Naive thymus-derived CD4-positive, alpha-beta T cell (primary cell): ENCODE measurements at regions of chr21 and their contacts with region 1.

Region 1: DNA sequence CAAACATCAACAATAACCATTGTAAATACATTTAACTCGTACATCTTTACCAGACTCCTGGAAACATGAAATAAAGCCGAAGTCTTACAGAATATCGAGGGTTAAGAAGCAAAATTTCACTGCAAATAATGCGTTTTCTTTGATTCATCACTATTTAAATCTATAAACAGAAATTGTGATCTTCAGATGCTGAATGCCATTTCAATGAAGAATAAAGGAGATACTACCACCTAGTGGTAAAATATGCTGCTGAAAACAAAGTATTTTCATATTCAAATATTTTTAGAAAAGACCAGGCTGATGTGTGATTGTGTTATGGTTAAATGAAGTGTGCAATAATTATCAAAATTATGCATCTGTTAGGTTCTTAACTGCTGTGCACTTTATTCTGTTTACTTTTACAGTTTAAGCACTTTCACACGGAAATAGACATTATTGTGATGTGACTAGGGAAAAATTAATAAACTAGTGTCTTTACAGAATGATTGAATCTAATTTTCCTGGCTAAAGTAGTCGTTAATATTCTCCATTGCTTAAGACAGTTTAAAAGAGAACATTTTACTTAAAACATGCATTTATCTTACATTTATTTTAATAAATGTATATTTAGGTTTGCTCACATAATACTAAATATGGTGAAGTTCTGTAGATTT is 1093.1 kb downstream of the MRPL39 start:
- DNase-seq: peak in 3 of 9 donors; percentile 4 to 7 (median 4)
- ATAC-seq: no peak
- H3K4me3 ChIP-seq: no peak overlapping the region
- H3K4me3 Mint-ChIP-seq: no peak overlapping the region
- H3K27ac ChIP-seq: no peak overlapping the region
- H3K27ac Mint-ChIP-seq: no peak overlapping the region
- H3K4me1 ChIP-seq: no peaks in the 10 kb centered on the region
- H3K4me1 Mint-ChIP-seq: no peaks in the 10 kb centered on the region
- H3K27me3 ChIP-seq: no peaks in the 10 kb centered on the region
- H3K27me3 Mint-ChIP-seq: no peaks in the 10 kb centered on the region

Region 2: DNA sequence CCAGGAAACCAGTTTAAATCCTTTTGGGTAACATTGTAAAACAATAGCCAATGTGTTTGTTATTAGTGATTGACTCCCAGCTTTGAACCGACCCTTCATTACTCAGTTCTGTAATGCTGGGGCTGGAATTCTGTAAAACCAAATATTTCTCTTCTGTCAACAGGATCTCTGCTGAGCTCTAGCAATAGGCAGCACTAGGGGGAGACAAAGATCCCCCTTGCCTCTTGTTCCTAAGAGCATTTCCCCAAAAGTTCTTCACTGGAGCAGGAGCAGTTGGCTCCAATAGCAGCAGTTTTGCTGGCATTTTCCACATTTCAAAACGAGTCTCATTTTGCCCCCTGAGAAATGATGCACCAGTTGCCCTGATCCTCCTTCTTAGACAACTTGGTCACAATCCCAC is 578.0 kb before region 1 on chr21:
- CTCF ChIA-PET with region 1: no interaction called
- POLR2A ChIA-PET with region 1: no interaction called
- intact Hi-C with region 1: loop called in 1 of 2 experiments (anchors 1 kb)
- DNase-seq: no peak
- ATAC-seq: no peak
- H3K4me3 ChIP-seq: no peak overlapping the region
- H3K4me3 Mint-ChIP-seq: no peak overlapping the region
- H3K27ac ChIP-seq: no peak overlapping the region
- H3K27ac Mint-ChIP-seq: no peak overlapping the region
- H3K4me1 ChIP-seq: no peaks in the 10 kb centered on the region
- H3K4me1 Mint-ChIP-seq: peaks cover 0 to 2% (median 0%) of the 10 kb centered on the region in 7 donors
- H3K27me3 ChIP-seq: no peaks in the 10 kb centered on the region
- H3K27me3 Mint-ChIP-seq: peaks cover 0 to 13% (median 0%) of the 10 kb centered on the region in 5 donors

Region 3: GRCh38 chr21:24045775-24046215 is 468.4 kb before region 1 on chr21:
- CTCF ChIA-PET with region 1: no interaction called
- POLR2A ChIA-PET with region 1: no interaction called
- intact Hi-C with region 1: loop called in 1 of 2 experiments (anchors 2 kb)
- DNase-seq: peak in 1 of 9 donors; percentile 4
- ATAC-seq: no peak
- H3K4me3 ChIP-seq: no peak overlapping the region
- H3K4me3 Mint-ChIP-seq: peak overlapping the region in 7 of 10 donors; percentile 26 to 53 (median 41)
- H3K27ac ChIP-seq: no peak overlapping the region
- H3K27ac Mint-ChIP-seq: peak overlapping the region in 3 of 9 donors; percentile 70 to 81 (median 74)
- H3K4me1 ChIP-seq: peaks cover 0 to 11% of the 10 kb centered on the region in 2 donors
- H3K4me1 Mint-ChIP-seq: peaks cover 0 to 36% (median 19%) of the 10 kb centered on the region in 7 donors
- H3K27me3 ChIP-seq: no peaks in the 10 kb centered on the region
- H3K27me3 Mint-ChIP-seq: no peaks in the 10 kb centered on the region

Region 4: DNA sequence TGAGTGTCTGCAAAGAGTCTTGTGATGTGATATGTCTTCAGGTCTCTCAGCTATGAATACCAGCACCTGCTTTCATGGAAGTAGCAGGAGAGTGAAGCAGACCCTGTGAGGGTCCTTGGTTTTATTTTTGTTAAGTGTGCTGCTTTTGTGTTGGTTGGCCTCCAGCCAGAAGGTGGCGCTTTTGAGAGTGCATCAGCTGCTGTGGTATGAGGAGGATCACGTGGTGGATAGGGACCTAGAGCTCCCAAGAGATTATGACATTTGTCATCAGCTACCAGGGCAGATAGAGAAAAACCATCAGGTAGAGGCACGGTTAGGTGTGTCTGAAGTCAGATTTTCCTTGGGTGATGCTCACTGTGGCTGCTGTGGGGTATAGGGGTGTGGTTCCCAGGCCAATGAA is 139.0 kb before region 1 on chr21:
- CTCF ChIA-PET with region 1: no interaction called
- POLR2A ChIA-PET with region 1: no interaction called
- intact Hi-C with region 1: loop called in 1 of 2 experiments (anchors 1 kb)
- DNase-seq: peak in 1 of 9 donors; percentile 7
- ATAC-seq: no peak
- H3K4me3 ChIP-seq: no peak overlapping the region
- H3K4me3 Mint-ChIP-seq: no peak overlapping the region
- H3K27ac ChIP-seq: no peak overlapping the region
- H3K27ac Mint-ChIP-seq: no peak overlapping the region
- H3K4me1 ChIP-seq: no peaks in the 10 kb centered on the region
- H3K4me1 Mint-ChIP-seq: peaks cover 0 to 3% (median 0%) of the 10 kb centered on the region in 7 donors
- H3K27me3 ChIP-seq: no peaks in the 10 kb centered on the region
- H3K27me3 Mint-ChIP-seq: no peaks in the 10 kb centered on the region